Activated CD4-positive, alpha-beta T cell treated with anti-CD3 and anti-CD28 coated beads for 36 hours (primary cell): ENCODE measurements at regions of chr17 and their contacts with region 1.

Region 1: DNA sequence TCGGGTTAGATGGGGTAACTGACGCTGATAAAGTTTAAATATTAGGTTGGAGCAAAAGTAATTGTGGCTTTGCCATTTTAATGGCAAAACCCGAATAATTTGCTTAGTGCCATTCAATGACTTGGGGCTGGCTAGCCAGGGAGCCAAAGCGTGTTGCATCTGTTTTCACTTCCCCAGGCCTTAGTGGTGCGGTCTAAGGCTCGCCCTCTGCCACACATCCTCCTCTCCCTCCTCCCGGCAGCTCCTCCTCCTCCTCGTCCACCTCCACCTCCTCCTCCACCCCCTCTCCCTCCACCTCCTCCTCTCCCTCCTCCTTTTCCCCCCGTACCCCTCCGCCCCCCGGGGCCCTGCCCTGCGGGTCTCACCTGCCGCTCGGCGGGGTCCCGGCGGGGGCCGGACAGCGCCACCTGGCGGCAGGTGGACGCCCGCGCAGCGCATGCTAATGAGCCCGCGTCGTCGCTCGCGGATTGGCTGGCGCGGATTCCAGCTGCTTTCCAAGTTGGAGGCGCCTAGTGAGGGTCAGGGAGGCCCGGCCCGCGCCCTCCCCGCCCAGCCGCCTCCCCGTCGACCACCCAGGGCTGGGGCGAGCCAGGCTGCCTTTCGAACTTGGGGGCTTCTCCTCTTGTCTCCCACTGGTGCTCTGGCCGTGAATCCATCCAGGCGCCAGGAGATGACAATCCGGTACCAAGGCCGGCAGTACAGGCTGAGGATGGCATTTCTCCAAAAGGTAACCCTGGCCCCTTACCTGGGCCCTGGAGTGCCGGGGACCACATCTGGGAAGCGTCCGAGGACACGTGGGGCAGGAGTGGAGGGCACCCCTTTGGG is 36.6 kb upstream of the RGS9 start:
- DNase-seq: peak; percentile 87
- ATAC-seq: peak; percentile 70
- H3K4me3 Mint-ChIP-seq: peak overlapping the region; percentile 78
- H3K27ac Mint-ChIP-seq: peak overlapping the region; percentile 96
- H3K4me1 Mint-ChIP-seq: peaks cover 24% of the 10 kb centered on the region
- H3K27me3 Mint-ChIP-seq: peaks cover 2% of the 10 kb centered on the region

Region 2: GRCh38 chr17:64781014-64781753 is 319.3 kb before region 1 on chr17:
- CTCF ChIA-PET with region 1: no interaction called
- POLR2A ChIA-PET with region 1: no interaction called
- intact Hi-C with region 1: loop called in 1 of 2 experiments (anchors 2 kb)
- DNase-seq: peak; percentile 71
- ATAC-seq: peak; percentile 28
- H3K4me3 Mint-ChIP-seq: peak overlapping the region; percentile 64
- H3K27ac Mint-ChIP-seq: no peak overlapping the region
- H3K4me1 Mint-ChIP-seq: peaks cover 34% of the 10 kb centered on the region
- H3K27me3 Mint-ChIP-seq: peaks cover 19% of the 10 kb centered on the region

Region 3: DNA sequence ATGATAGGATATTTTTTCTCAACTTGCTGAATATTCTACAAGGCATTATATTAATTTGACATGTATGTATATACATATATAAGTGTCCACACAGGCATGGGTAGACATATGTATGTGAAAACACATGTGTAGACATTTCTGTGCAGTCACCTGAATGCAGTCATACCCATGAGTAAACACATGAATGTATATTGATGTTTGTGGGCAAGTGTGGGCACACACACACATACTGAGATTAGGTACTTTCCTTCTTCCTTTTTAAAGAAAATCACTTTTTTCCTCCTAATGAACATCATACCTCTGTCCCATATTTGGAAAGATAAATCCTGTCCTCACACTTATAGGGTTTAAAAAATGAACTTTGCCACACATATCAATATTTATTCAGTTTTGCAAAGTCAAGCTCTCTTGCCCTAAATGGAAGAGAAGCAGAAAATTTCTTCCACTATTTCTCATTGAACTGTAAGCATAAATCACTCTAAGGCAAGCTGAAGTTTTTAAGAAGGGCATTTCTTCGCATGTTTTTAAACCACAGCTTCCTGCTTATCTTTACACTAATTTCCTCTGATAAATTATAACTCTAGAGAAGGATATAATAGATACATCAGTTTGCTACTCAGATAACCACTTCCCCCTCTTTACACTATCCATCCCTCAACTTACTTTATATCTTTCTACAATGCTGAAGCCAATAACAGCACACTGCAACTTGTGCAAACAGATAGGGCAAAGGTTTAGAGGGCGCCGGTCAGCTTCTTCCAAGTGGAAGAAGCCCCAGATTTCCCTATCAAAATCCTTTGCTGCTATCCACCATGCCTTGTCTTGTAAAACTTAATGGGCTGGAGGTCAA is 131.7 kb before region 1 on chr17:
- CTCF ChIA-PET with region 1: interaction called, 6 read pairs
- POLR2A ChIA-PET with region 1: interaction called, 5 read pairs
- intact Hi-C with region 1: loop called (anchors 1 kb)
- DNase-seq: peak; percentile 46
- ATAC-seq: peak; percentile 70
- H3K4me3 Mint-ChIP-seq: no peak overlapping the region
- H3K27ac Mint-ChIP-seq: peak overlapping the region; percentile 39
- H3K4me1 Mint-ChIP-seq: peaks cover 72% of the 10 kb centered on the region
- H3K27me3 Mint-ChIP-seq: no peaks in the 10 kb centered on the region

Region 4: DNA sequence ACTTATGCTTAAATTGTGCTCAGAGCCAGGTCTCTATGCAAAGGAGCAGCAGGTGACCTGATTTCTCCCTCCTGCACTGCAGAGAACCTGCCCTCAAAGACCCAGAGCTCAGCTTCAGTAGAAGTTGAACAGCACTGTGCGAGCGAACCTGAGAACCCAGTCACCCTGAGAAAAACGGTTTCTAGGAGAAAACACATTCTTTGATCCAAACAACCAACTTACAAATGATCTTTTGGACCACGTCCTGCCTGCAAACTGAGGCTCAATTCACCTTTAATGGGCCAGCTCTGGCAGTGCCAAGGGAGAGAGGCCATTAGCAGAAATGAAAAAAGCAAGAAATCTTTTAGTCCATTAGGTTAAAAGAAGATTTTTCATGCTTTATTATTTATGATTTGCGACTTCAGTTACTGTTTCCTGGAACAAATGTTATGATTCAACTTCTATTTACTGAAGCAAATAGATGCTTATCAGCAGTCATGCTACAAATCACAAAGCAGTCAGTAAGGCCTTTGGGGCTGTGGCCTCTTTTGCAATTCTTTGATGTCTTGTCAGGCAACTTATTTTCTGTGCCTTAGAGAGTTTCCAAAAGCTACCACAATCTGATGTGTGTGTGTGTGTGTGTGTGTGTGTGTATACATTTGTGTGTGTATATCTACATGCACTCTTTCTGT is 115.5 kb before region 1 on chr17:
- CTCF ChIA-PET with region 1: interaction called, 10 read pairs
- POLR2A ChIA-PET with region 1: interaction called, 4 read pairs
- intact Hi-C with region 1: loop called in 1 of 2 experiments (anchors 1 kb)
- DNase-seq: peak; percentile 65
- ATAC-seq: peak; percentile 44
- H3K4me3 Mint-ChIP-seq: peak overlapping the region; percentile 72
- H3K27ac Mint-ChIP-seq: peak overlapping the region; percentile 99
- H3K4me1 Mint-ChIP-seq: peaks cover 49% of the 10 kb centered on the region
- H3K27me3 Mint-ChIP-seq: no peaks in the 10 kb centered on the region

Region 5: GRCh38 chr17:65039336-65039988 is 61.1 kb before region 1 on chr17:
- CTCF ChIA-PET with region 1: interaction called, 6 read pairs
- POLR2A ChIA-PET with region 1: no interaction called
- intact Hi-C with region 1: loop called in 1 of 2 experiments (anchors 1 kb)
- DNase-seq: peak; percentile 65
- ATAC-seq: peak; percentile 90
- H3K4me3 Mint-ChIP-seq: peak overlapping the region; percentile 54
- H3K27ac Mint-ChIP-seq: peak overlapping the region; percentile 99
- H3K4me1 Mint-ChIP-seq: peaks cover 84% of the 10 kb centered on the region
- H3K27me3 Mint-ChIP-seq: no peaks in the 10 kb centered on the region

Region 6: DNA sequence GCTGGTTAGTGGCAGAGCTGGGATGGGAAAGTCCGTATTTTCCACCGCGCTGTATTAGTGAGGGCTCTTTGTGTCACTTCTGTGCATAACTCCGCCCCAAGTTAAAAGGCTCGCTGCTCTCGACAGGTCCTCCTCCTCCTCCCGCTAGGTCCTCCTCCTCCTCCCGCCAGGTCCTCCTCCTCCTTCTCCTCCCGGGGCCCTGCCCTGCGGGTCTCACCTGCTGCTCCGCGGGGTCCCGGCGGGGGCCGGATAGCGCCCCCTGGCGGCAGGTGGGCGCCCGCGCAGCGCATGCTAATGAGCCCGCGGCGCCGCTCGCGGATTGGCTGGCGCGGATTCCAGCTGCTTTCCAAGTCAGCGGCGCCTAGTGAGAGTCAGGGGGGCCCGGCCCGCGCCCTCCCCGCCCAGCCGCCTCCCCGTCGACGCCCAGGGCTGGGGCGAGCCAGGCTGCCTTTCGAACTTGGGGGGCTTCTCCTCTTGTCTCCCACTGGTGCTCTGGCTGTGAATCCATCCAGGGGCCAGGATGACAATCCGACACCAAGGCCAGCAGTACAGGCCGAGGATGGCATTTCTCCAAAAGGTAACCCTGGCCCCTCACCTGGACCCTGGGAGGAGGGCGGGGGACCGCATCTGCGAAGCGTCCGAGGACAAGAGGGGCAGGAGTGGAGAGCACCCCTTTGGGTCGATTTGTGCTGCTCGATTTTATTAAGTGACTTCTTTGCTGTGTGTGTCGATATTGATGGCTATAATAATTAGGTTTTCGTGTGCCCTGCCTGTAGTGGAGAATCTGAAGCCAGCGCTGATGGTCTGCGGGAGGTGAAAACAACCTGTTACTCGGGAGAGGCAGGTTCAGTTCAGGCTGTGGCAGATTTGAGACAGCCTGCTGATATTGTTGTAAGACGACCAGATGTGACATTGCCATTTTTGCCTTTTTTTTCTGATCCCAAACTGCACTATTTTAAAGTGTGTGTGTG is 36.8 kb after region 1 on chr17 and contains the start of gene RGS9:
- CTCF ChIA-PET with region 1: interaction called, 33 read pairs
- POLR2A ChIA-PET with region 1: no interaction called
- intact Hi-C with region 1: loop called in 1 of 2 experiments (anchors 1 kb)
- DNase-seq: peak; percentile 89
- ATAC-seq: peak; percentile 95
- H3K4me3 Mint-ChIP-seq: peak within 1 kb of the TSS; percentile 42
- H3K27ac Mint-ChIP-seq: peak within 1 kb of the TSS; percentile 62
- H3K4me1 Mint-ChIP-seq: peaks cover 14% of the 10 kb centered on the region
- H3K27me3 Mint-ChIP-seq: peaks cover 10% of the 10 kb centered on the region
- total RNA-seq, gene RGS9: 1.6 to 1.8 TPM

Region 7: DNA sequence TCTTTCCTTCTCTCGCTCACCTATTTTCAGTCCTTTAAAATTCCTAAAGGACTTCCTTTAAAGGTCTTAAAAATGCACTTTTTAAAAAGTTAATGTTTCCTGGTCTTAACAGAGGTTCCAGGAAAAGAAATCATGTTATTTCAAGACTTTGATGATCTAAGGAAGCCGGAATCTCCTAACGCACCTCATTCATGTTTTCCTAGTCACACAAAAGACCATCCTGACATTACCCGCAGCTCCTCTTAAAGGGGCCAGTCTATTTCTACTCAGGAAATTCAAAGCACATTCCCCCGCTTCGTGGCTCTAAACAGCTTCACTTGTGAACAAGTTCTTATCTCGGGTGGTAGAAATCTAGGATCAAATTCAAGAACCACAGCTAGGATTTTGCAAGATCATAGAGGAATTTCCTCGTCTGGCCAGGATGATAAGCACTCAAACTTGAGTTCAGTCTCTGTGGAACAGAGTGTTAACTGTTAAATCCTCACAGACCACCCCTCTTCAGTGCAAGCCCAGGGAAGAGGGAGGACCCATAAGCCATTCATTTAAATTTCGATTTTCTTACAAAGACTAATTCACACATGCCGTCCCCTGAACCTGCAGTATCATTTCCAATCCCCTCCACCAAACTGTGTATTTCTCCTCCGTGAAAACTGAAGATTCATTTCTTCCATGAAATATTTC is 598.0 kb after region 1 on chr17:
- CTCF ChIA-PET with region 1: no interaction called
- POLR2A ChIA-PET with region 1: no interaction called
- intact Hi-C with region 1: no loop called
- DNase-seq: no peak
- ATAC-seq: no peak
- H3K4me3 Mint-ChIP-seq: no peak overlapping the region
- H3K27ac Mint-ChIP-seq: no peak overlapping the region
- H3K4me1 Mint-ChIP-seq: no peaks in the 10 kb centered on the region
- H3K27me3 Mint-ChIP-seq: no peaks in the 10 kb centered on the region